A549 (cell line): ENCODE measurements at regions of chr12 and their contacts with region 1.

Region 1: DNA sequence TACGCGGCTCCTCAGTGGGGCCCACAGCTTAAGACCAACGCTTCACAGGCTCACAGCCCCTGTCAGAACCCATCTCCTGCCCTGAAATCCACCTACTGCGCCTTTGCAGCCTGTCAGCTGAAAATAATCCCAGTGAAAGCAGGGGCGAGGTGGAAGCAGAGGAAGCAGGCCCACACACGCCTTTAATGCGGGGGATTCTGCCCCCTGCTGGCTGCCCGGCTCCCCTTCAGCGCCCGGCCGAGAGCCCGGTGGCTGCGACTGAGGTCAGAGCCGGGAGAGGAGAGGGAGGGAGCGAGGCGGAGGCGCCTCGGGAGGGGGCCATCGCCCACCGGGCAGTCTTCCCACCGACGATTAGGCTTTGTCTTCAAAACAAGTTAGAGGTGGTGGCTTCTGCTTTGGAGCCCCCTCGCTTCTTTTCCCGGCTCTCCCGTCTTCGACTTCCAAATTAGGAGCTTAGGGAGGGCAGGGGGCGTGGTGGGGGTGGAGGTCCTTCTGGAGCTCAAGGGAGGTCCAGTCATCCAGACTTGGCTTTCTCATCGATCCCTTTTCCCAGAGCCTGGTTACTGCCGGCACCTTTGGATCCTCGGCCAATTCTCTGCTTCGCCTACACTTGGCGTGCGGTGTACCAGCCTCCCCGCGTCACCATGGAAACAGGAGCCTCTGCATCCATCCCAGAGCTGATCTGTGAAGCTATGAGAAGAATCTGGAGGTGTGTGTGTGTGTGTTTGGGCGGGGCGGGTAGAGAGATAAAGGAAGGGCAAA is 25.2 kb upstream of the RND1 start:
- DNase-seq: peak in 1 of 2 experiments; percentile 80
- ATAC-seq: peak; percentile 97 to 98
- H3K4me3 ChIP-seq: peak overlapping the region; percentile 38
- H3K27ac ChIP-seq: peak overlapping the region; percentile 51 to 76
- H3K4me1 ChIP-seq: peaks cover 24% of the 10 kb centered on the region
- CTCF ChIP-seq: peak; percentile 94
- EP300 ChIP-seq: no peak
- POLR2A ChIP-seq: no peak
- RAD21 ChIP-seq: peak; percentile 98 to 99

Region 2: DNA sequence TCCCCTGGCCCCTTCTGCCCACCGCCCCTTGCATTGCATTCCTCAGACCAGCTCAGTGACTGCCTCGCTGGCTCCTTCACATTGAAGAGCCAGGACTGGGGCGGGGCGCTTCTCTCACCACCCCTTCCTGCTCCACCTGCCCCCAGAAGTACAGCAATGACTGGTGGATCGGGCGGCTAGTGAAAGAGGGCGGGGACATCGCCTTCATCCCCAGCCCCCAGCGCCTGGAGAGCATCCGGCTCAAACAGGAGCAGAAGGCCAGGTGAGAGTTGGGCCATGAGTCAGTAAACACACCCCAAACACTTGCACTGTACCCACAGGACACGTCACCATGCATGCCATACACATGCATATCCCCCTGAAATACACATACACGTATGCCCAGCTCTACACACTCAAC is 66.7 kb before region 1 on chr12:
- CTCF ChIA-PET with region 1: interaction called, 42 read pairs
- POLR2A ChIA-PET with region 1: no interaction called
- DNase-seq: no peak
- ATAC-seq: no peak
- H3K4me3 ChIP-seq: no peak overlapping the region
- H3K27ac ChIP-seq: no peak overlapping the region
- H3K4me1 ChIP-seq: 0 out of 3 replicates have a peak, but pooled peaks cover 4% of the 10 kb centered on the region
- CTCF ChIP-seq: no peak
- EP300 ChIP-seq: no peak
- POLR2A ChIP-seq: no peak
- RAD21 ChIP-seq: no peak

Region 3: GRCh38 chr12:48851883-48852733 is 38.7 kb before region 1 on chr12 and contains the start of gene DDX23:
- CTCF ChIA-PET with region 1: interaction called, 1,365 read pairs
- POLR2A ChIA-PET with region 1: interaction called, 54 read pairs
- DNase-seq: peak; percentile 98
- ATAC-seq: peak; percentile 95
- H3K4me3 ChIP-seq: peak within 1 kb of the TSS; percentile 91
- H3K27ac ChIP-seq: peak within 1 kb of the TSS; percentile 95 to 97
- H3K4me1 ChIP-seq: peaks cover 21% of the 10 kb centered on the region; the same call in 2 of the 3 replicates
- CTCF ChIP-seq: no peak
- EP300 ChIP-seq: no peak
- POLR2A ChIP-seq: peak; percentile 71
- RAD21 ChIP-seq: no peak
- polyA plus RNA-seq, gene DDX23: 132 TPM in 2 replicates

Region 4: GRCh38 chr12:48910196-48910595 is 19.4 kb after region 1 on chr12:
- CTCF ChIA-PET with region 1: interaction called, 26 read pairs
- POLR2A ChIA-PET with region 1: no interaction called
- DNase-seq: peak in 1 of 2 experiments; percentile 46
- ATAC-seq: peak in 1 of 2 experiments; percentile 72; a peak in 3 of 6 replicates
- H3K4me3 ChIP-seq: no peak overlapping the region
- H3K27ac ChIP-seq: no peak overlapping the region
- H3K4me1 ChIP-seq: peaks cover 22% of the 10 kb centered on the region
- CTCF ChIP-seq: no peak
- EP300 ChIP-seq: no peak
- POLR2A ChIP-seq: no peak
- RAD21 ChIP-seq: no peak

Region 5: GRCh38 chr12:48957141-48958048 is 66.6 kb after region 1 on chr12 and contains the start of gene ARF3:
- CTCF ChIA-PET with region 1: interaction called, 13 read pairs
- POLR2A ChIA-PET with region 1: no interaction called
- DNase-seq: peak; percentile 95 to 96
- ATAC-seq: peak; percentile 87 to 94
- H3K4me3 ChIP-seq: peak within 1 kb of the TSS; percentile 79
- H3K27ac ChIP-seq: peak within 1 kb of the TSS; percentile 95
- H3K4me1 ChIP-seq: peaks cover 10% of the 10 kb centered on the region
- CTCF ChIP-seq: no peak
- EP300 ChIP-seq: no peak
- POLR2A ChIP-seq: peak; percentile 68
- RAD21 ChIP-seq: no peak
- polyA plus RNA-seq, gene ARF3: 281 and 287 TPM in 2 replicates